K562 (cell line): ENCODE measurements at regions of chr1 and their contacts with region 1.

Region 1: GRCh38 chr1:176897350-176898236 is 266.9 kb downstream of the ASTN1 start:
- DNase-seq: peak; percentile 79 to 92 (median 86)
- ATAC-seq: peak; percentile 97
- H3K4me3 ChIP-seq: no peak overlapping the region
- H3K27ac ChIP-seq: no peak overlapping the region
- H3K4me1 ChIP-seq: no peaks in the 10 kb centered on the region
- H3K27me3 ChIP-seq: peaks cover 2 to 30% of the 10 kb centered on the region in 2 experiments; a peak in 4 of 5 replicates
- CTCF ChIP-seq: peak; percentile 87 to 95 (median 88)
- EP300 ChIP-seq: no peak
- POLR2A ChIP-seq: no peak
- RAD21 ChIP-seq: peak; percentile 57 to 65

Region 2: DNA sequence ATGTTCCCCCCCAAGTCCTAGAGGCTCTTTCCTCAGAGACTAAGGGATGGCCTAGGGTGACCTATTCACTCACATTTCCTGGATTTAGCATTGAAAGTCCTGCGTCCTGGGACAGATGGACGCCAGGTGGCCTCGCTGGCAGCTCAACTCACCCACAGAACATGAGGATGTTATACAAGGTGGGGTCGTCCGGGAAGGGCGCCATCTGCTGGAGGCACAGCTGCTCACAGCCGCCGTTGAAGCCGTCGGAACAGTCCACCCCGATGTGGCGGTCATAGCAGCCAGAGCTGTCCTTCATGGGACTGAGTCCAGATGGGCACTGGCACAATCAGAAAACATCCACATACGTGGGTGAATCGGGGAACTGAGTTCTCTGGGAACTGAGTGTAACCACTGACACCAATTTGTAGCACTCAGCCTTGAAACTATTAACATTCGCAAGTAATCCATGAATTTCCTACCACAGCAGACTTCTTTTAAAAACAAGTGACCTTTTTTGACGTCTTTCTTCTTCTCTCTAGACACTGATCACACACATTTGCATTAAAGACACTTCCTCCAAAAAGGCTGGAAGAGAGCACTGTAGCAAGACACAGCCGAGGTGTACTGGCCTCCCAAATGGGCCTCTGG is 51.6 kb after region 1 on chr1:
- CTCF ChIA-PET with region 1: interaction called, 18 read pairs
- POLR2A ChIA-PET with region 1: no interaction called
- in situ Hi-C with region 1: no loop called
- intact Hi-C with region 1: loop called (anchors 1 kb)
- DNase-seq: peak; percentile 83 to 87 (median 85)
- ATAC-seq: peak; percentile 100
- H3K4me3 ChIP-seq: no peak overlapping the region
- H3K27ac ChIP-seq: no peak overlapping the region
- H3K4me1 ChIP-seq: no peaks in the 10 kb centered on the region
- H3K27me3 ChIP-seq: peaks cover 0 to 9% of the 10 kb centered on the region in 2 experiments; a peak in 1 of 5 replicates
- CTCF ChIP-seq: peak; percentile 97 to 99 (median 97)
- EP300 ChIP-seq: no peak
- POLR2A ChIP-seq: no peak
- RAD21 ChIP-seq: peak; percentile 51 to 84

Region 3: DNA sequence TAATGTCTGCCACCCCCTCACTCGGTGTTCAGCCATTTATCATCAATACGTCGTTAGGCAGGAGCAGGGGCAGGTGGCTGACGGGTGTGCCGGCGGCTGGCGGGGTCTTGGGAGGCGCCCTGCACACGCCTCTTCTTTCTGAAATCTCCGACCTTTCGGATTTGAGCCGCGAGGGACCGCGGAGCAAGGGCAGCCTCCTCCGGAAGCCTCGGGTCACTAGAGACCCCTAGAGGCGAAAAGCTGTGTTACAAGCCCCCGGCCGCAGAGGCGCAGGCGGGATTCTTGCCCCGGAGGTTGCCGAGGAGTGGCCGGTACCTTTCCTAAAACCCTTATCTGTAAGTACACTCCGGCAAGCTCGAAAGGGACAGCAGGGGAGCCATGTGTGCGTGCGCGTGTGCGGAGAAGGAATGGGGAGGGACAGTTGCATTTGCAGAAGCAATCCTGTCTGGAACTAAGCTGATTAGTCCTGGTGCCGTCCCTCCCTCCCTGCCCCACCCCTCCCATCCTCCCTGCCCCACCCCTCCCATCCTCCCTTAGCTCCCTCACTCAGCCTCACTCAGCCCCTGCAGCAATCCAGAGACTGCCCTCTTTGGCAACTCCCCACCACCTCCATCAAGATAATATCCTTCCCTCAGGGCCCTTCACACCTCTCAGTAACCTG is 284.2 kb after region 1 on chr1:
- CTCF ChIA-PET with region 1: interaction called, 10 read pairs
- POLR2A ChIA-PET with region 1: no interaction called
- in situ Hi-C with region 1: no loop called
- intact Hi-C with region 1: loop called (anchors 1 kb)
- DNase-seq: peak; percentile 77 to 85 (median 81)
- ATAC-seq: peak; percentile 99
- H3K4me3 ChIP-seq: no peak overlapping the region
- H3K27ac ChIP-seq: no peak overlapping the region
- H3K4me1 ChIP-seq: peaks cover 0 to 7% of the 10 kb centered on the region in 2 experiments; a peak in 2 of 5 replicates
- H3K27me3 ChIP-seq: no peaks in the 10 kb centered on the region
- CTCF ChIP-seq: peak; percentile 75 to 87 (median 81)
- EP300 ChIP-seq: no peak
- POLR2A ChIP-seq: no peak
- RAD21 ChIP-seq: peak; percentile 42 to 59

Region 4: DNA sequence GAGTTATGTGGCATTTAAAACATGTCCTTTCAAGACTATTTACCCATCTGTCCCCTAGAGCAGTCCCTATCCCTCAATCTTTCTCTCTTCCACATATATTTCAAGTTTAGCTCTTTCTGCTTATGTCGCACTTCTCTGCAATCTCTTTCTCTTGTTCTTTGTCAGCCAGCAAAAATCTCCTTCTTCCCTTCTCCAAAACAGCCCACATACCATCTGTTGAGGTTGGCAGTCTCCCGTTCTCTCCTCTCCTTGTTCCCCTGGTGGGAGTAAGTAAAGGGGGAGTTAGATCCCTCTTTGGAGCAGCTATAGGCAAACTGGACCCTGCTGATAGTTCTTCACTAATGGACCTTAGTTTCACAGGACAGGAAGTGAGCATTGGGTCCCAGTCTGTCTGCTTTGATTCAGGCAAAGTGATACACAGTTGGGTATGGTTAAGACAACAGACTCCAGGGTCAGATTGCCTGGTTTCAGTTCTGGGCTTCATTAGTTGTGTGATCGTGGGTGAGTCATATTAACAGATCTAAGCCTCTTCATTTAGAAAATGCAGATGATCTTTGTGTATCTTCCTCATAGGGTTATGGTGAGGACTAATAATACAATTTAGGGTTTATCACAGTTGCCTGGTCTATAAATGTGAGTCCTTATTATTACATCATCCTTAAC is 292.8 kb after region 1 on chr1:
- CTCF ChIA-PET with region 1: interaction called, 3 read pairs
- POLR2A ChIA-PET with region 1: no interaction called
- in situ Hi-C with region 1: loop called (anchors 10 kb)
- intact Hi-C with region 1: no loop called
- DNase-seq: no peak
- ATAC-seq: no peak
- H3K4me3 ChIP-seq: no peak overlapping the region
- H3K27ac ChIP-seq: no peak overlapping the region
- H3K4me1 ChIP-seq: no peaks in the 10 kb centered on the region
- H3K27me3 ChIP-seq: no peaks in the 10 kb centered on the region
- CTCF ChIP-seq: no peak
- EP300 ChIP-seq: no peak
- POLR2A ChIP-seq: no peak
- RAD21 ChIP-seq: no peak

Region 5: GRCh38 chr1:177355595-177355994 is 458.0 kb after region 1 on chr1:
- CTCF ChIA-PET with region 1: no interaction called
- POLR2A ChIA-PET with region 1: no interaction called
- in situ Hi-C with region 1: no loop called
- intact Hi-C with region 1: loop called (anchors 10 kb)
- DNase-seq: peak in 1 of 4 experiments; percentile 1
- ATAC-seq: no peak
- H3K4me3 ChIP-seq: no peak overlapping the region
- H3K27ac ChIP-seq: no peak overlapping the region
- H3K4me1 ChIP-seq: no peaks in the 10 kb centered on the region
- H3K27me3 ChIP-seq: no peaks in the 10 kb centered on the region
- CTCF ChIP-seq: no peak
- EP300 ChIP-seq: no peak
- POLR2A ChIP-seq: no peak
- RAD21 ChIP-seq: peak in 1 of 2 experiments; percentile 17; a peak in 1 of 4 replicates

Region 6: GRCh38 chr1:177948336-177948972 is 1050.9 kb after region 1 on chr1:
- CTCF ChIA-PET with region 1: interaction called, 22 read pairs
- POLR2A ChIA-PET with region 1: no interaction called
- in situ Hi-C with region 1: no loop called
- intact Hi-C with region 1: loop called (anchors 1 kb)
- DNase-seq: peak; percentile 54 to 64 (median 62)
- ATAC-seq: peak; percentile 86
- H3K4me3 ChIP-seq: no peak overlapping the region
- H3K27ac ChIP-seq: no peak overlapping the region
- H3K4me1 ChIP-seq: no peaks in the 10 kb centered on the region
- H3K27me3 ChIP-seq: peaks cover 0 to 6% of the 10 kb centered on the region in 2 experiments; a peak in 1 of 5 replicates
- CTCF ChIP-seq: peak; percentile 78 to 84 (median 80)
- EP300 ChIP-seq: no peak
- POLR2A ChIP-seq: no peak
- RAD21 ChIP-seq: peak in 1 of 2 experiments; percentile 51; a peak in 2 of 4 replicates

Region 7: DNA sequence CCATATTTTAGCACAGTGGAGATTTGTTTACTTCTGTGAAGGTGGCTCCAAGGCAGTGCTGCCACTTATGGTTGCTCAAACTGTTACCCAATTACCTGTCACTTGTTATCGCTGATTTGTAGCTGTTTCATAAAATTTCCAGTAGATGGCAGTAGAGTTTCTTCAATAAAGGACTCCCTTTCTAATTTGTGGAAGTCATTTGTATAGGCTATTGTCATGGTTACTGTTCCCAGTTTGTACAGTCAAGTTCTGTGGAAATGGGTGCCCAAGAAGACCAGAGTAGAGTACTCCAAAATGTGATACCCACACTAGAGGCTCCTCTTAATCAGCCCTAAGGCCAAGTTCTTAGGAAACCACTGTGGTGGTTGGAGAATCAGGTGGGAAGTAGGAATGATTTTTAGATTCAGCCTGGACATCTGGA is 1413.1 kb after region 1 on chr1:
- CTCF ChIA-PET with region 1: no interaction called
- POLR2A ChIA-PET with region 1: no interaction called
- in situ Hi-C with region 1: no loop called
- intact Hi-C with region 1: loop called (anchors 10 kb)
- DNase-seq: peak; percentile 52 to 58 (median 54)
- ATAC-seq: peak; percentile 85
- H3K4me3 ChIP-seq: no peak overlapping the region
- H3K27ac ChIP-seq: no peak overlapping the region
- H3K4me1 ChIP-seq: no peaks in the 10 kb centered on the region
- H3K27me3 ChIP-seq: no peaks in the 10 kb centered on the region
- CTCF ChIP-seq: peak; percentile 45 to 82 (median 70); a peak in 5 of 6 replicates
- EP300 ChIP-seq: no peak
- POLR2A ChIP-seq: no peak
- RAD21 ChIP-seq: peak; percentile 72 to 76